Activated CD4-positive, alpha-beta memory T cell treated with anti-CD3 and anti-CD28 coated beads for 36 hours (primary cell): ENCODE measurements at regions of chr10 and their contacts with region 1.

Region 1: GRCh38 chr10:102917962-102918816 is at the start of gene CNNM2:
- DNase-seq: peak; percentile 100
- H3K4me3 Mint-ChIP-seq: peak within 1 kb of the TSS; percentile 90
- H3K27ac Mint-ChIP-seq: peak within 1 kb of the TSS; percentile 84
- H3K4me1 Mint-ChIP-seq: peaks cover 45% of the 10 kb centered on the region
- H3K27me3 Mint-ChIP-seq: peaks cover 4% of the 10 kb centered on the region
- total RNA-seq, gene CNNM2: 4.0 to 4.2 TPM

Region 2: GRCh38 chr10:102375250-102375649 is 542.9 kb before region 1 on chr10:
- CTCF ChIA-PET with region 1: no interaction called
- POLR2A ChIA-PET with region 1: no interaction called
- intact Hi-C with region 1: no loop called
- DNase-seq: no peak
- H3K4me3 Mint-ChIP-seq: no peak overlapping the region
- H3K27ac Mint-ChIP-seq: no peak overlapping the region
- H3K4me1 Mint-ChIP-seq: no peaks in the 10 kb centered on the region
- H3K27me3 Mint-ChIP-seq: no peaks in the 10 kb centered on the region

Region 3: GRCh38 chr10:102904346-102904745 is 13.8 kb before region 1 on chr10:
- CTCF ChIA-PET with region 1: interaction called, 21 read pairs
- POLR2A ChIA-PET with region 1: no interaction called
- intact Hi-C with region 1: no loop called
- DNase-seq: no peak
- H3K4me3 Mint-ChIP-seq: no peak overlapping the region
- H3K27ac Mint-ChIP-seq: no peak overlapping the region
- H3K4me1 Mint-ChIP-seq: no peaks in the 10 kb centered on the region
- H3K27me3 Mint-ChIP-seq: no peaks in the 10 kb centered on the region

Region 4: DNA sequence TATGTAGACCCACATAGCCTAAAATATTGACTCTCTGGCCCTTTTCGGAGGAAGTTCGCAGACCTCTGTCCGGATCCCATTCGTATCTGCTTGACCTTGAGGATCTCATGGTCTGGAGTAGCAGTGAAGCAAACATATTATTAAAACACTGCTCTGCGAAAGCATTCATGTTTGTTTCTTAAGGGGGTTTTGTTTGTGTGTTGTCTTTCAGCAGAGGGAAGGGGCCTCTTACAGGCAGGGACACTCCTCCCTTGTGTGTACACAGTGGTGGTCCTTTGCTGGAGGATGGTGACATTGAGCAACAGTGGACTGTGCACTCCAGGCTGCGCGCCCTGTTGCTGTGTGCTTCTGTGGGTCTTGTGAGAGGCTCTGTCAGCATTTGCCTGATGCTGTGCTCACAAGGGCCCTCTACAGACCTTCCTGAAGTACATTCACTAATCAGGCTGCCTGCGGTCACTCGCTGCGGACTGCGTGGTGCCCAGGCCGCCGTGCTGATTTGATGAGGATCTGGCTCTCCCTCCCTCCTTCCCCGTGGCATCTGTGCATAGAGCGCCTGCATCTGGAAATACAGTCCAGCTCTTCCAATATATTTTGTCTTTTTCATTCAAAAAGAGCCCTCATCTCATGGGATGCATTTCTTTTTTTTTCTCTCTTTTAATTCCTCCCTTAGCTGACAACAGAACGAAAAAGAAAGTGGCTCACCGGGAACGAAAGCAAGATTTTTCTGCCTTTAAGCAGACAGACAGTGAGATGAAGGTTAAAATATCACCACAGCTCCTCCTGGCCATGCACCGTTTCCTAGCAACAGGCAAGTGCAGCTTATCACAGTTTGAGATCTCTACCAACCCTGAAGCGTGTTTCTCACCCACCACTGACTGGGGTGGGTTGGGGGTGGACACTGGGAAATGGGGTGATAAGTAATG is 135.7 kb after region 1 on chr10:
- CTCF ChIA-PET with region 1: interaction called, 35 read pairs
- POLR2A ChIA-PET with region 1: interaction called, 10 read pairs
- intact Hi-C with region 1: loop called (anchors 1 kb)
- DNase-seq: peak; percentile 66
- H3K4me3 Mint-ChIP-seq: peak overlapping the region; percentile 75
- H3K27ac Mint-ChIP-seq: peak overlapping the region; percentile 84
- H3K4me1 Mint-ChIP-seq: peaks cover 17% of the 10 kb centered on the region
- H3K27me3 Mint-ChIP-seq: no peaks in the 10 kb centered on the region

Region 5: GRCh38 chr10:103192451-103193106 is 274.4 kb after region 1 on chr10:
- CTCF ChIA-PET with region 1: interaction called, 18 read pairs
- POLR2A ChIA-PET with region 1: interaction called, 4 read pairs
- intact Hi-C with region 1: loop called (anchors 1 kb)
- DNase-seq: peak; percentile 81
- H3K4me3 Mint-ChIP-seq: peak overlapping the region; percentile 92
- H3K27ac Mint-ChIP-seq: peak overlapping the region; percentile 92
- H3K4me1 Mint-ChIP-seq: peaks cover 43% of the 10 kb centered on the region
- H3K27me3 Mint-ChIP-seq: no peaks in the 10 kb centered on the region

Region 6: GRCh38 chr10:103396064-103396788 is 478.0 kb after region 1 on chr10 and contains the starts of genes ATP5MK and PDCD11:
- CTCF ChIA-PET with region 1: no interaction called
- POLR2A ChIA-PET with region 1: no interaction called
- intact Hi-C with region 1: loop called (anchors 1 kb)
- DNase-seq: peak; percentile 98
- H3K4me3 Mint-ChIP-seq: peak within 1 kb of the TSS; percentile 95
- H3K27ac Mint-ChIP-seq: peak within 1 kb of the TSS; percentile 88
- H3K4me1 Mint-ChIP-seq: peaks cover 59% of the 10 kb centered on the region
- H3K27me3 Mint-ChIP-seq: no peaks in the 10 kb centered on the region
- total RNA-seq, gene ATP5MK: 436 to 438 TPM
- total RNA-seq, gene PDCD11: 56.4 to 56.7 TPM